Brain microvascular endothelial cell (primary cell): ENCODE measurements at regions of chr20 and their contacts with region 1.

Region 1: DNA sequence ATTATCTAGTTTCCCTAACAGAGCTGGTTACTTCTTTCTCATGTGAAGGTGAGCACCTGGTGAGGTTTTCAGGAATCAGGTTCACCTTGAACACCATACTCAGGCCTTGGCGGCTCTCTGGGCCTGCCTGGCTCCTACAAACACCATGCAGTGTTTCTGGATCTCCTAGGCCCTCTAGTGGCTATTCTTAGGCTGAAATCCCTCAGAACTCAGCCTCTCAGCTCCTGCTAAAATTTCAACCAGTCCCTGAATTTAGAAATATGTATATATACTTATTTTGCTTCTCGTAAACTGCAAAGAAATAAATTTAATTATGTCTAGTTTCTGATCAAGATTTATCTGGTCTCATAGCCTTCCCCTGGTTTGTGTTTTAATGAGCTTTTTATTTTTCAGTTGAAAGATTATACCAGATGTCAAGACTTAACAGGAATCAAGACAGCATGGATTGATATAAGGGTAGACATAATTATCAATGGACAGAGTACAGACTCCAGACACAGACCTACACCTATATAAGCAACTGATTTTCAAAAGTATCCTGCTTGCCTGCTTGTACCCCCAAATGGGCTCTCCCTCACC is 55.9 kb downstream of the ANKEF1 start:
- DNase-seq: peak; percentile 44
- H3K4me3 ChIP-seq: no peak overlapping the region
- H3K27ac ChIP-seq: no peak overlapping the region
- H3K27me3 ChIP-seq: no peaks in the 10 kb centered on the region
- CTCF ChIP-seq: peak; percentile 87

Region 2: GRCh38 chr20:9838378-9839295 is 252.0 kb before region 1 on chr20 and contains the start of gene PAK5:
- in situ Hi-C with region 1: no loop called
- DNase-seq: peak; percentile 18
- H3K4me3 ChIP-seq: peak within 1 kb of the TSS; percentile 50
- H3K27ac ChIP-seq: no peak within 1 kb of the TSS
- H3K27me3 ChIP-seq: peaks cover 3% of the 10 kb centered on the region
- CTCF ChIP-seq: no peak

Region 3: DNA sequence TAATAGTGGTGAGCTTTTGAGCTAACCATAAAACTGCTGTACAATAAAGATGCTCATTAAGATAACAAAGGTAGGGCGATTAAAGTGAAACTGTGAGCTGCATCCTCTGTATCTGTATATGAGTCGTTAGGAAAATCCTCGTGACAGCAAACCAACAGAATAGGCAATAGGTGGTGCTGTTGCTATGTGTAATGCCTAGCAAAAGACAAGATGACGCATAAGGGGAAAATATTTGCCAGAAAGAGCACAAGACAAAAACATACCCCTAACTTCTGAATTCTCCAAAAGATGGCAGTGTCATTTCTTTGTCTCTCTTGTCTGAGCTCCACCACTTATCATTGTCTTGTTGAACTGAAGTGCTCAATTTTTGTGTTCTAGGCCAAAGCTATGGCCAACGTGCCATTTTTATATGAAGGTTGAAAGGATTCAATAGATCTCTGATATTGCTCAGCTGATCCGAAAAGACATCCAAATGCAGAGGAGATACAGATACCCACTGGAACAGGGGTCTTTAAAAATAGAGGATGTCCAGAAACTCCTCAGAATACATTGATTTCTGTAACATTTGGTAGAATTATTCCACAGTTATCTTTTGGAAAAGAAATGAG is 112.2 kb before region 1 on chr20:
- in situ Hi-C with region 1: loop called (anchors 25 kb)
- DNase-seq: peak; percentile 82
- H3K4me3 ChIP-seq: no peak overlapping the region
- H3K27ac ChIP-seq: no peak overlapping the region
- H3K27me3 ChIP-seq: peaks cover 6% of the 10 kb centered on the region
- CTCF ChIP-seq: peak; percentile 71